ENCODE measurements at regions of chr17 and their contacts with region 1.

Region 1: GRCh38 chr17:81101614-81102306 is 63.5 kb upstream of the PVALEF start:
- DNase-seq: peak; percentile 89
- ATAC-seq: peak; percentile 65
- H3K4me3 ChIP-seq: no peak overlapping the region
- H3K27ac ChIP-seq: no peak overlapping the region
- H3K4me1 ChIP-seq: peaks cover 19% of the 10 kb centered on the region
- H3K27me3 ChIP-seq: no peaks in the 10 kb centered on the region
- CTCF ChIP-seq: peak; percentile 99

Region 2: DNA sequence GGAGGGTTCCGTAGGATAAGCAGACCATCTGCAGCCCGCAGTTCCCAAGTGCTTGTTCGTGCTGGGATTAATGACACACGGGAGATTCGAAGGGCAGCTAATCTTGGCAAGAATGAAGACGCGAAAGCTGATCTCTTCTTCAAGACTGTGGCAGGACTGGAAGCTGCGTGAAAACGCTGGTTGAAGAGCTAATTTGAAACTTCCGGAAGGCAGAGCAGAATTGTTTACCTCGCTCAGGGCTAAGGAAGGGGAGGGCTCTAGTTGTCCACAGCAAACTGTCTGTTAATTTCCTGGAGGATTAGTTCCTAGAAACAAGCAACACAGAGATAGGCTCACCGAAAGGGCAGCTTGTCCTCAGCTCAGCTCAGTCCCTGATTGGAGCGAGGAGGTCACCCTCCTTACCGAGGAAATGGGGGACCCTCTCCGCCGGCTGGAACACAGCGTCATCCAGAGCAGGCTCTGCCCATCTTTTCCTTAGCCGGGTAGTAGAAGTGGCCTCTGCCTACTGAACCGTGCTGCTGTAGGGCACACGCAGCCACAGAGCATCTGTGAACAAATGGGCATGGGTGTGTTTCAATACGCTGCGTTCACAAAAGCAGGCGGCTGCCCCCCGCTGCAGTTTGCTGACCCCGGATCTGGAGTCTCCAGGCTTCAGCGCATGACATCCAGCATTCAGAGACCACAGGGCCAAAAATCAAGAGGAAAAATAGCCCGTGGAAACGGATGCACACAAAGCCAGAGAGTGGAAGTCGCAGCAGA is 83.5 kb before region 1 on chr17:
- CTCF ChIA-PET with region 1: interaction called, 21 read pairs
- POLR2A ChIA-PET with region 1: interaction called, 11 read pairs
- intact Hi-C with region 1: loop called (anchors 1 kb)
- DNase-seq: peak; percentile 41
- ATAC-seq: peak; percentile 80
- H3K4me3 ChIP-seq: peak overlapping the region; percentile 4; the same call in 1 of the 2 replicates
- H3K27ac ChIP-seq: no peak overlapping the region
- H3K4me1 ChIP-seq: peaks cover 3% of the 10 kb centered on the region; the same call in 1 of the 2 replicates
- H3K27me3 ChIP-seq: no peaks in the 10 kb centered on the region
- CTCF ChIP-seq: no peak

Measured in PC-3 (cell line).